HAP-1 (cell line): ENCODE measurements at regions of chr10 and their contacts with region 1.

Region 1: GRCh38 chr10:22988581-22989360 is 60.9 kb downstream of the ARMC3 start:
- DNase-seq: peak; percentile 62 to 68
- H3K4me3 ChIP-seq: no peak overlapping the region
- H3K4me1 ChIP-seq: peaks cover 2% of the 10 kb centered on the region; the same call in 1 of the 2 replicates
- H3K27me3 ChIP-seq: no peaks in the 10 kb centered on the region

Region 2: DNA sequence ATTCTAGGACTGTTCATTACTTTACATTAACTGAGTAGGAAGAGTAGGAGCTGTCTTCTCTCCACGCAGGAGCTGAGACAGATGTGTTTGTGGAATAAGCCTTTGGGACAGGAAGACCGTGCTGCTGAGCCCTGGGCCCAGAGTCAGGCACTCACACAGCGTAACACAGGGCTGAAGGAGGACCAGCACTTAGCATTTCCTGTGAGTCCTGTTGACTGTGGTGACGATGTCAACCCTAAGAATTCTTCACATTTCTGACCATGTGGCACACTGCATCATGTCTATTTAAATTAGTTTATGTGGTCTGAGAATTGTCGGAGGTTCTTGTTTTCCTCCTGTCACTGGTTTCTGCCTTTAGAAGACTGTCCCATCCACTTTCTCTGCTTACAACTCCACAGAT is 391.6 kb before region 1 on chr10:
- in situ Hi-C with region 1: loop called (anchors 25 kb)
- DNase-seq: no peak
- H3K4me3 ChIP-seq: no peak overlapping the region
- H3K4me1 ChIP-seq: no peaks in the 10 kb centered on the region
- H3K27me3 ChIP-seq: no peaks in the 10 kb centered on the region